Dendritic cell treated with granulocyte-macrophage colony-stimulating factor and Interleukin-4, amounts not matched to agents 40 ng/mL and 50 ng/mL, for 4 days (primary cell): ENCODE measurements at regions of chr14 and their contacts with region 1.

Region 1: GRCh38 chr14:94036313-94037050 is 10.3 kb downstream of the OTUB2 start:
- H3K4me3 Mint-ChIP-seq: no peak overlapping the region
- H3K27ac Mint-ChIP-seq: no peak overlapping the region
- H3K4me1 Mint-ChIP-seq: peaks cover 5% of the 10 kb centered on the region
- H3K27me3 Mint-ChIP-seq: peaks cover 3% of the 10 kb centered on the region

Region 2: GRCh38 chr14:93648440-93649168 is 387.9 kb before region 1 on chr14:
- intact Hi-C with region 1: no loop called
- H3K4me3 Mint-ChIP-seq: no peak overlapping the region
- H3K27ac Mint-ChIP-seq: no peak overlapping the region
- H3K4me1 Mint-ChIP-seq: no peaks in the 10 kb centered on the region
- H3K27me3 Mint-ChIP-seq: peaks cover 23% of the 10 kb centered on the region

Region 3: GRCh38 chr14:94005324-94006073 is 31.0 kb before region 1 on chr14:
- intact Hi-C with region 1: no loop called
- H3K4me3 Mint-ChIP-seq: no peak overlapping the region
- H3K27ac Mint-ChIP-seq: no peak overlapping the region
- H3K4me1 Mint-ChIP-seq: no peaks in the 10 kb centered on the region
- H3K27me3 Mint-ChIP-seq: peaks cover 40% of the 10 kb centered on the region

Region 4: DNA sequence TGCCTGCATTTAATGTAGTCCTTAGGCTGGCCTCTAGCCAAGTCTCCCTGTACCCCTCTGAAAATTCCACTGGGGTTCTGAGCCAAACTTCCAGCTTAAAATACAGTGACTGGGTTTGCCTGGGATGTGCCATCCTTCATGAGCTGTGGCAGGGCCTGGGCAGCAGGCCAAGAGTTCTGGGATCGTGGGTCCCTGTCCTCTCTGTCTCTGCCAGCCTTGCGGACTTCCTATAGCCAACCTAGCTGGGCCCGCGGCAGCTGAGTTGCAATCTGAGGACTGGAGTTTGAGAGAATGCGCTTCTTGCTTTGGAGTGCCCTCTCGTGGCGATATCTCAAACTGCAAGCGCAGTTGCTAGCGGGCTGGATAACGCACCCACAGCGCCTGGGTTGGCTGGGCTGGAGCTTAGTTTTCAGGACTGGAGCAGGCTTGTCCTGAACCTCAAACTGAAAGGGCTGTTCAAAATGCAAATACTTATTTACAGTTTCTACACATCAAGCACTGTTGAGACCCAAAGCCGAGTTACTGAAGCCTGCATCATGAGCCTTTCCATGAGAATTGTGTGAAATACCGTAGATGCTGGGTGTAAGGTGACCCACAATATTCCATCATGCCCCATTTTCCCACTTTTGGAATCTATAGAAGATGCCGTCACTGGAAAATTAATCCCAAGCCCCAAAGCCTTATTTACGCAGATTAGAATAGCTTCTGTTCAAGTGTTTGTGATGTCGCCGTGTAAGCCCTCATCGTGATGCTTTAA is 100.3 kb after region 1 on chr14:
- intact Hi-C with region 1: loop called (anchors 1 kb)
- H3K4me3 Mint-ChIP-seq: no peak overlapping the region
- H3K27ac Mint-ChIP-seq: no peak overlapping the region
- H3K4me1 Mint-ChIP-seq: no peaks in the 10 kb centered on the region
- H3K27me3 Mint-ChIP-seq: peaks cover 17% of the 10 kb centered on the region

Region 5: DNA sequence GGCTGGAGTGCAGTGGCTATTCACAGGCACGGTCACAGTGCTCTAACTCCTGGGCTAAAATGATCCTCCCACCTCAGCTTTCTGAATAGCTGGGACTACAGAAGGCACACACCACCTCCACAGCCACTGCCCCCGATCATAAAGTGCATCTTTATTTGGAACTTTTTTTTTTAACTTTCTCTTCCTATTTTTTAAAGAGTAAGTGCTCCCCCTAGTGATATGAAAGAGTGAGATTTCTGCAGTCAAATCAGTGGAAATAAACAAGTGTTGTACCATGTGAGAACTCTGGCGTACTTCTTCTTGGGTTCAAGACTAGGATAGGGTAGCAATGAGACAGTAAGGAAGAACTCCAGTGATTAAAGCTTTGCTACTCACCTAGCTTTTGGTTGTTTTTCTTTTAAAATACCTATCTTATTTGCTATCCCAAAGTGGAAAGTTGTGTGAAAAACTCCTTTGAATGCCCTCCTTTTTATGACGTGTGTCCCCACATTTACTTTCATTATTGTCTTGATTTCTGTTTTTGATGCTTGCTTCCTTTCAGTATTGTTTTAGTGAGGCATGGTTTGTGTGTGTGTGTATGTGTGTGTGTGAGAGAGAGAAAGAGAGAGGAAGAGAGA is 144.3 kb after region 1 on chr14:
- intact Hi-C with region 1: loop called (anchors 1 kb)
- H3K4me3 Mint-ChIP-seq: peak overlapping the region; percentile 0
- H3K27ac Mint-ChIP-seq: peak overlapping the region; percentile 2
- H3K4me1 Mint-ChIP-seq: peaks cover 6% of the 10 kb centered on the region
- H3K27me3 Mint-ChIP-seq: peaks cover 38% of the 10 kb centered on the region